Heart left ventricle (tissue), 16 donors: ENCODE measurements at regions of chr1 and their contacts with region 1.

Region 1: GRCh38 chr1:28642847-28643635 is at the start of gene TAF12:
- DNase-seq: peak; percentile 92 to 96 (median 94)
- ATAC-seq: peak; percentile 91 to 96 (median 95)
- H3K4me3 ChIP-seq: peak within 1 kb of the TSS; percentile 43 to 93 (median 76)
- H3K27ac ChIP-seq: peak within 1 kb of the TSS; percentile 74 to 93 (median 86)
- H3K4me1 ChIP-seq: peaks cover 6 to 44% (median 35%) of the 10 kb centered on the region in 12 donors
- H3K27me3 ChIP-seq: no peaks in the 10 kb centered on the region
- CTCF ChIP-seq: peak in 10 of 12 donors; percentile 24 to 57 (median 44)
- POLR2A ChIP-seq: peak in 1 of 2 donors; percentile 94
- total RNA-seq, gene TAF12: 18.3 to 38.5 (median 21.1) TPM

Region 2: DNA sequence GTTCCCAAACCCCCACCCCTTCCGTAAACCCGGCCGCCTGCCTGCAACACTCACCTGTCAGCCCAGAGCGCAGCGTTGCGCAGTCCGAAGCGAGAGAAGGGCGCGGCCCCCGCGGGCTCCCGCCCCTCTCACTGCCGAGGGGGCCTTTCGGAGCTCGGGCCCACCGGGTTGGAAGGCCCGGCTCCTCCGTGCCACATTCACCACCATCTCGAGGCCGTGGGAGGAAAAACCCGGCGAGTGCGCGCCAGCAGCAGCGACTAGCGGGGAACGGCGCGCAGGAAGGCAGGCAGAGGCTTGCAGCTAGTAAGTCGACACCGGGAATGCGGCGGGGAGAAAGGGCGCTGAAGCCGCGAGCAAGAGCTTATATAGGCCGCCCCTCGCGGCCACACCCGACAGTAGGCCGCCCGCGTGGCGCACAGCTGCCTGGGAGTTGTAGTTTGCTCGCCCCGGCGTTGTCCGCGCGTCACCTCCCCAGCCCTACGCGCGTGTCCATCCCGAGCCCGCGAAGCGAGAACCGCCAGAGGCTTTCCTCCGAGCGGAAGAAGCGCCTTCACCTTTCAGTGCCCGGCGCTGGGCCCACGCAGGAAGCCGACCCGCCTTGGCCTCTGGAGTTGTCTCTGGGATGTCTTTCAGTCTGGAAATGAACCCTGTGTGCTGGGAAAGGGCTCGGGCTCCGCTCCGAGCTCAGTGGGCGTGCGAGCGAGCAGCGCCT is 61.3 kb before region 1 on chr1:
- intact Hi-C with region 1: loop called in 1 of 10 experiments (anchors 10 kb)
- DNase-seq: peak; percentile 95 to 98 (median 97)
- ATAC-seq: peak; percentile 97 to 99 (median 99)
- H3K4me3 ChIP-seq: peak overlapping the region; percentile 67 to 99 (median 88)
- H3K27ac ChIP-seq: peak overlapping the region; percentile 59 to 94 (median 86)
- H3K4me1 ChIP-seq: peaks cover 0 to 52% (median 21%) of the 10 kb centered on the region in 12 donors
- H3K27me3 ChIP-seq: no peaks in the 10 kb centered on the region
- CTCF ChIP-seq: peak in 3 of 12 donors; percentile 7 to 32 (median 18)
- POLR2A ChIP-seq: peak; percentile 13 to 98

Region 3: GRCh38 chr1:28736450-28737306 is 93.6 kb after region 1 on chr1 and contains the start of gene YTHDF2:
- intact Hi-C with region 1: loop called (anchors 2 to 5 kb)
- DNase-seq: peak; percentile 98 to 99 (median 98)
- ATAC-seq: peak; percentile 98 to 99 (median 99)
- H3K4me3 ChIP-seq: peak within 1 kb of the TSS; percentile 66 to 100 (median 95)
- H3K27ac ChIP-seq: peak within 1 kb of the TSS; percentile 77 to 98 (median 95)
- H3K4me1 ChIP-seq: peaks cover 5 to 48% (median 45%) of the 10 kb centered on the region in 12 donors
- H3K27me3 ChIP-seq: no peaks in the 10 kb centered on the region
- CTCF ChIP-seq: peak; percentile 90 to 99 (median 96)
- POLR2A ChIP-seq: peak in 1 of 2 donors; percentile 76
- total RNA-seq, gene YTHDF2: 31.3 to 56.3 (median 40.0) TPM

Region 4: GRCh38 chr1:28886731-28887418 is 243.8 kb after region 1 on chr1:
- intact Hi-C with region 1: loop called in 1 of 10 experiments (anchors 10 kb)
- DNase-seq: peak; percentile 83 to 94 (median 87)
- ATAC-seq: peak; percentile 76 to 85 (median 82)
- H3K4me3 ChIP-seq: peak overlapping the region; percentile 60 to 94 (median 87)
- H3K27ac ChIP-seq: peak overlapping the region; percentile 53 to 90 (median 84)
- H3K4me1 ChIP-seq: peaks cover 0 to 55% (median 16%) of the 10 kb centered on the region in 12 donors
- H3K27me3 ChIP-seq: peaks cover 0 to 10% (median 0%) of the 10 kb centered on the region in 9 donors
- CTCF ChIP-seq: no peak
- POLR2A ChIP-seq: peak; percentile 54 to 70